ENCODE measurements at regions of chr12 and their contacts with region 1.

Region 1: DNA sequence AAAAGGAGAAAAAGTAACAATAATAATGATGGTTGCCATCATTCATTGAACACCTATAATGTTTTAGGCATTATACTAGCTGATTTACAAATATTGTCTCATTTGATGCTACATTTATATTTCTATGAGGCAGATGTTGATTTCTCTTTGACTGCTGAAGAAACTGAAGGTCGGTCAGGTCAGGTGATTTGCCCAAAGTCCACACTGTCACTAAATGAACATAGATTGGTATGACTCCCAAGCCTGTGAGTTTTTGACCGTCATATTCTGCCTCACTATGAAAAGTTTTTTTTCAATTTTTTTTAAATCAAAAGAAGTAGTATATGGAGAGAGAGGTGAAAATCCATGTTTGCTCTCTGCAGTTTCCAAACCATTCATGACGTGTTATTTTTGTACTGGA is 10.8 kb downstream of the ALG10B start:
- DNase-seq: no peak
- H3K4me3 ChIP-seq: no peak overlapping the region
- H3K4me3 Mint-ChIP-seq: no peak overlapping the region
- H3K27ac ChIP-seq: no peak overlapping the region
- H3K27ac Mint-ChIP-seq: no peak overlapping the region
- H3K4me1 ChIP-seq: peaks cover 3% of the 10 kb centered on the region
- H3K4me1 Mint-ChIP-seq: peaks cover 0 to 2% (median 0%) of the 10 kb centered on the region in 4 donors
- H3K27me3 ChIP-seq: no peaks in the 10 kb centered on the region
- H3K27me3 Mint-ChIP-seq: no peaks in the 10 kb centered on the region

Region 2: GRCh38 chr12:38258411-38258810 is 68.9 kb before region 1 on chr12:
- CTCF ChIA-PET with region 1: no interaction called
- POLR2A ChIA-PET with region 1: no interaction called
- intact Hi-C with region 1: no loop called
- DNase-seq: no peak
- H3K4me3 ChIP-seq: no peak overlapping the region
- H3K4me3 Mint-ChIP-seq: no peak overlapping the region
- H3K27ac ChIP-seq: no peak overlapping the region
- H3K27ac Mint-ChIP-seq: no peak overlapping the region
- H3K4me1 ChIP-seq: no peaks in the 10 kb centered on the region
- H3K4me1 Mint-ChIP-seq: no peaks in the 10 kb centered on the region
- H3K27me3 ChIP-seq: no peaks in the 10 kb centered on the region
- H3K27me3 Mint-ChIP-seq: no peaks in the 10 kb centered on the region

Region 3: GRCh38 chr12:39103552-39104165 is 776.3 kb after region 1 on chr12:
- CTCF ChIA-PET with region 1: interaction called, 17 read pairs
- POLR2A ChIA-PET with region 1: no interaction called
- intact Hi-C with region 1: no loop called
- DNase-seq: peak in 4 of 5 donors; percentile 32 to 36 (median 34)
- H3K4me3 ChIP-seq: no peak overlapping the region
- H3K4me3 Mint-ChIP-seq: no peak overlapping the region
- H3K27ac ChIP-seq: no peak overlapping the region
- H3K27ac Mint-ChIP-seq: no peak overlapping the region
- H3K4me1 ChIP-seq: no peaks in the 10 kb centered on the region
- H3K4me1 Mint-ChIP-seq: peaks cover 0 to 3% (median 0%) of the 10 kb centered on the region in 4 donors
- H3K27me3 ChIP-seq: no peaks in the 10 kb centered on the region
- H3K27me3 Mint-ChIP-seq: peaks cover 0 to 4% of the 10 kb centered on the region in 2 donors